Activated CD4-positive, alpha-beta memory T cell treated with anti-CD3 and anti-CD28 coated beads for 36 hours (primary cell): ENCODE measurements at regions of chr7 and their contacts with region 1.

Region 1: GRCh38 chr7:138752568-138753518 is 45.0 kb upstream of the TMEM213 start:
- DNase-seq: peak; percentile 98
- H3K4me3 Mint-ChIP-seq: peak overlapping the region; percentile 34
- H3K27ac Mint-ChIP-seq: peak overlapping the region; percentile 84
- H3K4me1 Mint-ChIP-seq: peaks cover 78% of the 10 kb centered on the region
- H3K27me3 Mint-ChIP-seq: no peaks in the 10 kb centered on the region

Region 2: GRCh38 chr7:138002096-138002827 is 750.6 kb before region 1 on chr7:
- CTCF ChIA-PET with region 1: no interaction called
- POLR2A ChIA-PET with region 1: no interaction called
- intact Hi-C with region 1: loop called (anchors 1 kb)
- DNase-seq: peak; percentile 98
- H3K4me3 Mint-ChIP-seq: peak overlapping the region; percentile 94
- H3K27ac Mint-ChIP-seq: peak overlapping the region; percentile 87
- H3K4me1 Mint-ChIP-seq: peaks cover 31% of the 10 kb centered on the region
- H3K27me3 Mint-ChIP-seq: no peaks in the 10 kb centered on the region

Region 3: GRCh38 chr7:138738551-138739335 is 14.1 kb before region 1 on chr7:
- CTCF ChIA-PET with region 1: interaction called, 17 read pairs
- POLR2A ChIA-PET with region 1: no interaction called
- intact Hi-C with region 1: no loop called
- DNase-seq: peak; percentile 92
- H3K4me3 Mint-ChIP-seq: no peak overlapping the region
- H3K27ac Mint-ChIP-seq: peak overlapping the region; percentile 23
- H3K4me1 Mint-ChIP-seq: peaks cover 8% of the 10 kb centered on the region
- H3K27me3 Mint-ChIP-seq: no peaks in the 10 kb centered on the region

Region 4: GRCh38 chr7:138768241-138768640 is 15.4 kb after region 1 on chr7:
- CTCF ChIA-PET with region 1: no interaction called
- POLR2A ChIA-PET with region 1: no interaction called
- intact Hi-C with region 1: no loop called
- DNase-seq: no peak
- H3K4me3 Mint-ChIP-seq: no peak overlapping the region
- H3K27ac Mint-ChIP-seq: no peak overlapping the region
- H3K4me1 Mint-ChIP-seq: peaks cover 5% of the 10 kb centered on the region
- H3K27me3 Mint-ChIP-seq: no peaks in the 10 kb centered on the region

Region 5: DNA sequence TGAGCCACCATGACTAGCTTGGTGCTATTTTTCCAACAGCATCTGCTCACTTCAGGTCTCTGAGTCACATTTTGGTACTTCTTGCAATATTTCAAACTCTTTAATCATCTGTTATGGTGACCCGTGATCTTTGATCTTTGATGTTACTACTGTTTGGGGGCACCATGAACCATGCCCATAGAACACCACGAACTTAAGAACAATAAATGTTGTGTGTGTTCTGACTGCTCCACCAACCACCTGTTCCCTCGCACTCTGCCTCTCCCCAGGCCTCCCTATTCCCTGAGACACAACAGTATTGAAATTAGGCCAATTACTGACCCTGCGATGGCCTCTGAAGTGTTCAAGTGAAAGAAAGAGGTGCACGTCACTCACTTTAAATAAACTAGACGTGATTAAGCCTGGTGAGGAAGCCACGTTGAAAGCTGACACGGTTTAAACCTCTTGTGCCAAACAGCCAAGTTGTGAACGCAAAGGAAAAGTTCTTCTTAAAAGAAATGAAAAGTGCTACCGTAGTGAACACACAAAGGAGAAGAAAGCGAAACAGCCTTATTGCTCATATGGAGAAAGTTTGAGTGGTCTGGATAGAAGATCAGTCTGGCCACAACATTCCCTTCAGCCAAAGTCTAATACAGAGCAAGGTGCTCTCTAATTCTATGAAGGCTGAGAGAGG is 72.3 kb after region 1 on chr7:
- CTCF ChIA-PET with region 1: no interaction called
- POLR2A ChIA-PET with region 1: no interaction called
- intact Hi-C with region 1: loop called (anchors 1 kb)
- DNase-seq: no peak
- H3K4me3 Mint-ChIP-seq: no peak overlapping the region
- H3K27ac Mint-ChIP-seq: peak overlapping the region; percentile 35
- H3K4me1 Mint-ChIP-seq: peaks cover 8% of the 10 kb centered on the region
- H3K27me3 Mint-ChIP-seq: peaks cover 10% of the 10 kb centered on the region

Region 6: DNA sequence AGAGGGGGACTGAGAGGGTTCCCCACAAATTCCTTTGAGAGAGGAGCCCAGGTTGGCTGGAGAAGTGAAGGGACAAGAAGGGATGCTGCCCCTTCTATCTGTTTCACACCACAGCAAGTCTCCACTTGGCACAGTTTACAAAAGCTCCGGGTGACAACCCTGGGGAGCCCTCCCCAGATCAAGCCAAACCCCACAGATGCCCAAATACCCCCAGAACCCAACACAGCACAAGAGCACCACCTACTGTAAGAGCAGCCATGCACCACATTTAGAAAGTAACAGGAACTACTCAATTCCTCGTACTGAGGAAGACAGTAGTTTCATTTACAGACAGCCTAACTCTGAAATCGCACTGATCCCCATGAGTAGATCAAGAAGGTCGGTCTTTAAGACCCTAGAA is 113.0 kb after region 1 on chr7:
- CTCF ChIA-PET with region 1: interaction called, 3 read pairs
- POLR2A ChIA-PET with region 1: no interaction called
- intact Hi-C with region 1: loop called (anchors 2 kb)
- DNase-seq: peak; percentile 73
- H3K4me3 Mint-ChIP-seq: no peak overlapping the region
- H3K27ac Mint-ChIP-seq: no peak overlapping the region
- H3K4me1 Mint-ChIP-seq: peaks cover 21% of the 10 kb centered on the region
- H3K27me3 Mint-ChIP-seq: peaks cover 3% of the 10 kb centered on the region

Region 7: DNA sequence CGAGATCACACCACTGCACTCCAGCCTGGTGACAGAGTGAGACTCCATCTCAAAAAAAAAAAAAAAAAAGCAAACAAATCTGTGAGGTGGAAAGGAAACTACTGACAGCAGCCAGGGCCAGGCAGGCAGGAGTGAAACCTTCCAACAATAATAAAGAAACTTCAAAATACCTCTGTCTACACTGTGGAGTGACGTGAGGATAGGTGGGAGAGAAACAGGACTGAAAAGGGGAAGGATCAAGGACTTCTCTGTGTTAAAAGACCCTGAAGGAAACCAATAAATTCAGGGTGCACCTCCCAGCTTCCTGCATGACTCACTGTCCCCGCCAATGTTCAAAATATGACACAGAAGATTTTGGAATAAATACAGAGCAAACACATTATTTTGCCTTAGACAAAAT is 145.4 kb after region 1 on chr7:
- CTCF ChIA-PET with region 1: no interaction called
- POLR2A ChIA-PET with region 1: no interaction called
- intact Hi-C with region 1: loop called (anchors 1 kb)
- DNase-seq: peak; percentile 45
- H3K4me3 Mint-ChIP-seq: peak overlapping the region; percentile 21
- H3K27ac Mint-ChIP-seq: peak overlapping the region; percentile 70
- H3K4me1 Mint-ChIP-seq: peaks cover 30% of the 10 kb centered on the region
- H3K27me3 Mint-ChIP-seq: peaks cover 15% of the 10 kb centered on the region

Region 8: DNA sequence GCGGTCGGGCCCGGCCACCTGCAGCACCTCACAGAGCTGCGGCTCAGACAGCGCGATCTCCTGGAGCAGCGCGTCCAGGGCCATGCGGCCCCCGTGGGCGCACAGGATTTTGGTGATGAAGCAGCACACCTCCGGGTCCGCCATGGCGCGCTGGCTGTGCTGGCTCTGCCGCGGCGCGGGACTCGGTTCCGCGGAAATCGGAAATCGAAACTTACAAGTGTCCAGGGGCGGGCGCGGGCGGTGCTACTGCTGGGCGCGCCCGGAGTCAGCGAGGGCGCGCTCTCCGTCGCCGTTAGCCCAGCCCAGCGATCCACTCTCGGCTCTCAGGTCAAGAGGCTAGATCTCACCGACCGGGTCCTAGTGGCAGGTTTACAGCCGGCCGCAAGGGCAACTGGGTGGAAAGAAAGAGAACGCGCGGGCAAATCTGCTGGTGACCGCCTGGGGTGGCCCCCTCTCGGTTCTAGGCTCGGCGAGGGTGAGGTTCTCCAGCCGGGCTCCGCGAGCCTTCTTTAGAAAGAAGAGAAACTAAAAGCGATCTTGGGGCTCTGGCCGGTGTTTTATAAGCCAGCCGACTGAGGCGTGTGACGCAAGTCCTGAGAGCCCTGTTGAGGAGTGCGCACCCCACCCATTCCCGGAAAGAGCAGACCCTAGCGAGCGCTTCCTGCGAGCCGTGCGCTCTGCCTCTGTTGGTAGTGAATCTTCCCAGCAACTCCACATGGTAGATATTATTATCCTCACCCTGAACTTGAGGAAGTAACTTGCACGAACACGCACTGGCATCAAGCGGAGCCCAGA is 356.5 kb after region 1 on chr7 and contains the start of gene ZC3HAV1:
- CTCF ChIA-PET with region 1: no interaction called
- POLR2A ChIA-PET with region 1: interaction called, 3 read pairs
- intact Hi-C with region 1: loop called (anchors 5 kb)
- DNase-seq: peak; percentile 92
- H3K4me3 Mint-ChIP-seq: peak within 1 kb of the TSS; percentile 98
- H3K27ac Mint-ChIP-seq: peak within 1 kb of the TSS; percentile 98
- H3K4me1 Mint-ChIP-seq: peaks cover 28% of the 10 kb centered on the region
- H3K27me3 Mint-ChIP-seq: no peaks in the 10 kb centered on the region
- total RNA-seq, gene ZC3HAV1: 99.3 to 99.6 TPM